Heart left ventricle (tissue), 16 donors: ENCODE measurements at regions of chr22 and their contacts with region 1.

Region 1: DNA sequence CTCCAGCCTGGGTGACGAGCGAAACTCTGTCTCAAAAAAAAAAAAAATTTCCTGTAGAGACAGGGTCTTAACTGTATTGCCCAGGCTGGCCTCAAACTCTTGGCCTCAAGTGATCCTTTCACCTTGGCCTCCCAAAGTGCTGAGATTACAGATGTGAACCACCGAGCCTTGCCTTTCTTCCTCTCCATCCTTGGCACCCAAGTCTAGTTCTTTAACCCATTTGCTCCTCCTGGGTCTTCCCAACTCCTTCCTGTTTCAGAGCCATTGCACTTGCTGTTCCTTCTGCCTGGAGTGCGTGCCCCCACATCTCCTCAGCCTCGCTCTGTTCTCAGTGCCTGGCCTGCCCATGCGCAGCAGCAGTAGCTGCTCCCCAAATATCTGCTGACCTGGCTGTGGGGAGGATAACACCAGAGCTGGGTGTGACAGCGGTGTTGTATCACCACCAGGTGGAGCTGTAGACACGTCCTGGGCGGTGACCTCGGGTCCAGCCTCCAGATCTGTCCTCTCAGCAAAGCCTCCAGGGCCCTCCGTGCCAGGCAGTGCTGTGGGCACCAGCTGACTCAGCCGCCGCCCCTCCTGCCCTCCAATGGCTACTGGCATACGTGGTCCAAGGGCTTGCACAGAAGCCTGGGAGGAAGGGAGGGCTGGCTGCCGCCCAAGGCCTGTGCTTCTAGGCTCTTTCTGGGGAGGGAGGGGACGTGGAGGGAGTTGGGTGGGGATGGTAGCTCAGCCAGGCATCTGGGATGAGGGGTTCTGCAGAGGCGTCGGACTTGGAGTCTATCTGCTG is 22.0 kb downstream of the TEF start:
- DNase-seq: peak; percentile 88 to 98 (median 93)
- ATAC-seq: peak; percentile 87 to 93 (median 88)
- H3K4me3 ChIP-seq: peak overlapping the region in 1 of 12 donors; percentile 3
- H3K27ac ChIP-seq: peak overlapping the region in 9 of 12 donors; percentile 1 to 91 (median 69)
- H3K4me1 ChIP-seq: peaks cover 0 to 30% (median 17%) of the 10 kb centered on the region in 12 donors
- H3K27me3 ChIP-seq: no peaks in the 10 kb centered on the region
- CTCF ChIP-seq: peak; percentile 92 to 98 (median 96)
- POLR2A ChIP-seq: peak in 1 of 2 donors; percentile 35

Region 2: GRCh38 chr22:41468381-41469217 is 64.9 kb after region 1 on chr22 and contains the starts of genes ACO2 and PHF5A:
- intact Hi-C with region 1: loop called in 1 of 10 experiments (anchors 5 kb)
- DNase-seq: peak; percentile 97 to 99 (median 98)
- ATAC-seq: peak; percentile 95 to 97 (median 97)
- H3K4me3 ChIP-seq: peak within 1 kb of the TSS; percentile 71 to 100 (median 95)
- H3K27ac ChIP-seq: peak within 1 kb of the TSS; percentile 91 to 99 (median 97)
- H3K4me1 ChIP-seq: peaks cover 0 to 53% (median 34%) of the 10 kb centered on the region in 12 donors
- H3K27me3 ChIP-seq: no peaks in the 10 kb centered on the region
- CTCF ChIP-seq: no peak
- POLR2A ChIP-seq: peak; percentile 58 to 77
- total RNA-seq, gene ACO2: 503 to 1,146 (median 862) TPM
- total RNA-seq, gene PHF5A: 13.4 to 29.3 (median 20.0) TPM

Region 3: GRCh38 chr22:41517172-41518047 is 113.7 kb after region 1 on chr22:
- intact Hi-C with region 1: loop called in 8 of 10 experiments (anchors 1 to 5 kb)
- DNase-seq: peak in 3 of 5 donors; percentile 63 to 74 (median 70)
- ATAC-seq: peak in 3 of 4 donors; percentile 37 to 40 (median 38)
- H3K4me3 ChIP-seq: no peak overlapping the region
- H3K27ac ChIP-seq: peak overlapping the region in 9 of 12 donors; percentile 16 to 89 (median 54)
- H3K4me1 ChIP-seq: peaks cover 0 to 48% (median 18%) of the 10 kb centered on the region in 12 donors
- H3K27me3 ChIP-seq: no peaks in the 10 kb centered on the region
- CTCF ChIP-seq: peak; percentile 81 to 93 (median 88)
- POLR2A ChIP-seq: no peak

Region 4: GRCh38 chr22:41526837-41527799 is 123.4 kb after region 1 on chr22:
- intact Hi-C with region 1: loop called in 5 of 10 experiments (anchors 2 to 5 kb)
- DNase-seq: peak in 1 of 5 donors; percentile 50
- ATAC-seq: peak in 1 of 4 donors; percentile 22
- H3K4me3 ChIP-seq: no peak overlapping the region
- H3K27ac ChIP-seq: peak overlapping the region in 10 of 12 donors; percentile 77 to 93 (median 89)
- H3K4me1 ChIP-seq: peaks cover 7 to 66% (median 46%) of the 10 kb centered on the region in 12 donors
- H3K27me3 ChIP-seq: no peaks in the 10 kb centered on the region
- CTCF ChIP-seq: peak; percentile 73 to 86 (median 79)
- POLR2A ChIP-seq: no peak

Region 5: DNA sequence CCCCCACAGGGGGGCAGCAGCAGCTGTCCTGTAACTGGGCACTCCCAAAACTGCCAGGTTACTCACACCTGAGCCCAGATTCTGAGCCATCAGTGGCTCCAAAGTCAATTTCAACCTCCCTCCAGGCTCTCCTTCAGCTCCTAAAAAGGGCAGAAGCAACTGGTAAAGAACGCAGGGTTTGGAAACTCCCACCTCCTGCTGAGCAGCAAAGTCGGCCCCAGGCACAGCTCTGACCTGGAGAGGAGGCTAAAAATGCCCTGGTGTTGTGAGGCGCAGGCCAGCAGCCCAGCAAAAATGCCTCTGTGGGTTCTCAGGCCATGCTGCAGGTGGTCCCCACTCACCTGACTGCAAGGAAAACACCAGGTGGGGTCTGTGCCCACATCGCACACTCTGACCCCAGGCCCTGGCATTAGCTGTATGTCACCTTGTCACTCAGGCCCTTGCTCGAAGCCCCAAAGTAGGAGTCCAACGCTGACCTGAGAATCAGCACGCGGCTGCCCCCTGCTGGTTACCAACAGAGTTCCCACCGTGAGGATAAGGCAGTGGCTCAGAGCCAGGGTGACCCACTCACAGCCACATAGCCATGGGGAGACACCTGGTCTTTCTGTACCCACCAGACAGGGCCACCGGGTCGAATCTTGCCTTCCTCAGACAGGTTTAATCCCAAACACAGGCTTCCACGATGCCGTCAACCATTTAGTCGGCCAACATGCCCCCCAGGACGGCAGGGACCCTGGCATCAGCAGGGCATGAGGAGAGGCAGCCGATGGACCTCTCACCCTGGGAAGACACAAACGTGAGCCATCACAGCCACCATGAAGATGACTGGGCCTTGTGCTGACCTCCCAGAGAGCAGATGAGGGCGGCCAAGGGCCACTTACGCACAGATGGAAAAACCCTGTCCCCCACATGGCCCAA is 129.4 kb after region 1 on chr22:
- intact Hi-C with region 1: loop called in 3 of 10 experiments (anchors 2 to 5 kb)
- DNase-seq: peak; percentile 71 to 89 (median 83)
- ATAC-seq: peak; percentile 46 to 67 (median 54)
- H3K4me3 ChIP-seq: no peak overlapping the region
- H3K27ac ChIP-seq: peak overlapping the region in 10 of 12 donors; percentile 57 to 81 (median 66)
- H3K4me1 ChIP-seq: peaks cover 0 to 33% (median 10%) of the 10 kb centered on the region in 12 donors
- H3K27me3 ChIP-seq: no peaks in the 10 kb centered on the region
- CTCF ChIP-seq: peak; percentile 71 to 84 (median 76)
- POLR2A ChIP-seq: no peak

Region 6: GRCh38 chr22:41596776-41597634 is 193.3 kb after region 1 on chr22:
- intact Hi-C with region 1: loop called in 2 of 10 experiments (anchors 2 to 5 kb)
- DNase-seq: peak; percentile 51 to 76 (median 66)
- ATAC-seq: peak; percentile 70 to 90 (median 89)
- H3K4me3 ChIP-seq: no peak overlapping the region
- H3K27ac ChIP-seq: peak overlapping the region in 10 of 12 donors; percentile 10 to 67 (median 58)
- H3K4me1 ChIP-seq: peaks cover 0 to 15% (median 2%) of the 10 kb centered on the region in 12 donors
- H3K27me3 ChIP-seq: no peaks in the 10 kb centered on the region
- CTCF ChIP-seq: peak; percentile 48 to 76 (median 67)
- POLR2A ChIP-seq: no peak